RWPE1 (cell line): ENCODE measurements at regions of chr2 and their contacts with region 1.

Region 1: GRCh38 chr2:197515739-197516392 is at the start of gene MOB4:
- DNase-seq: peak; percentile 87
- H3K27ac ChIP-seq: peak within 1 kb of the TSS; percentile 86
- CTCF ChIP-seq: no peak

Region 2: GRCh38 chr2:197480165-197481036 is 35.5 kb before region 1 on chr2:
- CTCF ChIA-PET with region 1: no interaction called
- POLR2A ChIA-PET with region 1: interaction called, 17 read pairs
- DNase-seq: no peak
- H3K27ac ChIP-seq: no peak overlapping the region
- CTCF ChIP-seq: no peak

Region 3: GRCh38 chr2:197499594-197500526 is 16.0 kb before region 1 on chr2 and contains the starts of genes HSPD1 and HSPE1:
- CTCF ChIA-PET with region 1: no interaction called
- POLR2A ChIA-PET with region 1: interaction called, 10 read pairs
- DNase-seq: peak; percentile 96
- H3K27ac ChIP-seq: peak within 1 kb of the TSS; percentile 97
- CTCF ChIP-seq: no peak